SK-N-SH (cell line): ENCODE measurements at regions of chr10 and their contacts with region 1.

Region 1: GRCh38 chr10:102072673-102073527 is 7.8 kb downstream of the HPS6 start:
- DNase-seq: peak; percentile 78
- H3K4me3 ChIP-seq: no peak overlapping the region
- H3K27ac ChIP-seq: no peak overlapping the region
- H3K4me1 ChIP-seq: peaks cover 0 to 4% of the 10 kb centered on the region in 2 experiments; a peak in 2 of 4 replicates
- H3K27me3 ChIP-seq: no peaks in the 10 kb centered on the region
- CTCF ChIP-seq: peak; percentile 92
- EP300 ChIP-seq: no peak
- RAD21 ChIP-seq: peak; percentile 84

Region 2: DNA sequence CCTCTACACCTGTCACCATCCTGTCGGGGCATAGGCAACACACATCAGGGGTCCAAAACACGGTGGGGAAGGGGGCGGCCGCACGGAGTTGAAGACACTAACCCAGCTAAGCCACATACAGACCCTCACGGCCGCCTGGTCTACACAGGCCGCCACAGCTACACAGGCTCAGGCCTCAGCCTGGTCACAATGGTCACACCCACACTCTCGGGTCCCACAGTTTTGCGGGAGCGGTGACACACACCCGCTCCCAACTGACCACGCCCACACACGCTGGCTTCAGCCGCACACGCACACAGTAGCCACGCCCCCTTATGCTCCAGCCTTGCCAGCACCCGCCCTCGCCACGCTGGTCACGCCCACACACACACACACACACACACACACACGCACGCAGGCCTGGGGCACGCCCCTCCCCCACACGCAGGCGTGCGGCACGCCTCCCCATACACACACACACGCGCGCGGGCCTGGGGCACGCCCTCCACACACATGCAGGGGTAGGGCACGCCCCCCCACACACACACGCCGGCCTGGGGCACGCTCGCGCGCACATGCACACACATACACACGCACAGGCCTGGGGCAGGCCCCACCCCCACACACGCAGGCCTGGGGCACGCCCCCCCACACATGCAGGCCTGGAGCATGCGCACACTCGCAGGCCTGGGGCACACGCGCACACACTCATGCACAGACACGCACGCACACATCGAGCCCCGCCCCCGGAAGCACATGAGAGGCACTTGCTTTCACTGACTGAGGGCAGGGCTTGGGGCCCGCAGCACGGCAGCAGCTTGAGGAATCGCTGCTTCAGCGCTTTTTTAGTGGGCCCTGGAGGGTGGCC is 242.4 kb before region 1 on chr10:
- CTCF ChIA-PET with region 1: interaction called, 10 read pairs
- POLR2A ChIA-PET with region 1: no interaction called
- DNase-seq: peak; percentile 96
- H3K4me3 ChIP-seq: peak overlapping the region; percentile 45 to 49
- H3K27ac ChIP-seq: peak overlapping the region; percentile 41 to 87; a peak in 3 of 4 replicates
- H3K4me1 ChIP-seq: peaks cover 14 to 35% of the 10 kb centered on the region in 2 experiments; a peak in 3 of 4 replicates
- H3K27me3 ChIP-seq: no peaks in the 10 kb centered on the region
- CTCF ChIP-seq: no peak
- EP300 ChIP-seq: no peak
- RAD21 ChIP-seq: no peak

Region 3: DNA sequence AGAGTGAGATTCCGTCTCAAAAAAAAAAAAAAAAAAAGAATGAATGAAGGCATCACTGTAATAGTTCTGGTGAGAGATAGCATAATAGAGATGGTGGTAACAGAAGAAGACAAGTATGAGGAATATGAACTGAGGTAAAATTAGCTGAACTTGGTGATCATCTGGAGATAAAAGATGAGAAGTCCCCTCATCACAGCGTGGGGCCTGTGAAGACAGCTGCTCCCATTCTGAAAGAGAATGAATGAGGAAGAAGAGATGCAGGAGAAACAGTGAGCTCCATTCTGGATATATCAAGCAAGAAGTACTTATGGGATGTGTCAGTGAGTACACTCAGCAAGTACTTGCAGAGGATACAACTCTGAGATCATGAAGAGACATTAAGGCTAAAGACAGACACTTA is 45.6 kb before region 1 on chr10:
- CTCF ChIA-PET with region 1: interaction called, 10 read pairs
- POLR2A ChIA-PET with region 1: no interaction called
- DNase-seq: no peak
- H3K4me3 ChIP-seq: no peak overlapping the region
- H3K27ac ChIP-seq: no peak overlapping the region
- H3K4me1 ChIP-seq: no peaks in the 10 kb centered on the region
- H3K27me3 ChIP-seq: no peaks in the 10 kb centered on the region
- CTCF ChIP-seq: no peak
- EP300 ChIP-seq: no peak
- RAD21 ChIP-seq: no peak

Region 4: GRCh38 chr10:102083541-102083940 is 10.6 kb after region 1 on chr10:
- CTCF ChIA-PET with region 1: interaction called, 54 read pairs
- POLR2A ChIA-PET with region 1: interaction called, 3 read pairs
- DNase-seq: no peak
- H3K4me3 ChIP-seq: no peak overlapping the region
- H3K27ac ChIP-seq: no peak overlapping the region
- H3K4me1 ChIP-seq: no peaks in the 10 kb centered on the region
- H3K27me3 ChIP-seq: no peaks in the 10 kb centered on the region
- CTCF ChIP-seq: no peak
- EP300 ChIP-seq: no peak
- RAD21 ChIP-seq: no peak

Region 5: GRCh38 chr10:102101152-102101551 is 28.3 kb after region 1 on chr10:
- CTCF ChIA-PET with region 1: interaction called, 38 read pairs
- POLR2A ChIA-PET with region 1: no interaction called
- DNase-seq: no peak
- H3K4me3 ChIP-seq: no peak overlapping the region
- H3K27ac ChIP-seq: no peak overlapping the region
- H3K4me1 ChIP-seq: no peaks in the 10 kb centered on the region
- H3K27me3 ChIP-seq: no peaks in the 10 kb centered on the region
- CTCF ChIP-seq: no peak
- EP300 ChIP-seq: no peak
- RAD21 ChIP-seq: no peak

Region 6: DNA sequence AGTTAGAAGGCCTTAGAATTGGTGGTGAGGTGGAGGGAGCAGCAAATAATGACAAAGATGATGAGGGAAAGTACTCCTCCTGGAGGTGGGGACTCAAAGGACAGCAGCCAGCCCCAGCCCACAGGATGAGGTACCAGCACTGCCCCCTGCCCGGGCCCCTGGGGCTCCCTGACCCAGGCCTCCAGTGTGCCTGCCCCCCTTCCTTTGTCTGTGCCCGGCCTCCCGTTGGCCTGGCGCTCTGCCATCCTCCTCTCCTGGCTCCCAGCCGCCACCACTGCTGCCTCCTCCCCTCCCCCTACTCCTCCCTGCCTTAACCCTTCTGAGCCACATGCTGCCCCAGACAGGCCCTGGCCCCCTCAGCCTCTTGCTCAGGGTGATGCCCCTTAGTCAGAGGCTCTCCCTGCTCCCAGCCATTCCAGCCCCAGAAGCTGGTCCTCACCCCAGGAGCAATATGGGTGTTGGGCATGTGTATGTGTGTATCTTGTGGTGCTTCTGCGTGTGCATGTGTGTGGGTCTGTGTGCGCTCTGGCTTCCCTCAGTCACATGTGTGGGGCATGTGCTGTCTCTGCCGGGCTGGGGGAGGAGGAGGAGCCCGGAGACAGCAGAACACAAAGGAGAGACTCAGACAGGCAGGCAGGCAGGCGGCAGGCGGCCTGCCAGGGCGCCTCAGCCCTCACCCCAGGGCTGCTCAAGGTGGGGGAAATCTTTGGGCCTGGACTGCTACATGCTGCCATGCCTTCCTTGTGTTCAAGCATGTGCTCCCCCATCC is 44.7 kb after region 1 on chr10:
- CTCF ChIA-PET with region 1: interaction called, 14 read pairs
- POLR2A ChIA-PET with region 1: no interaction called
- DNase-seq: peak; percentile 89
- H3K4me3 ChIP-seq: peak overlapping the region; percentile 29 to 86
- H3K27ac ChIP-seq: peak overlapping the region; percentile 86 to 99
- H3K4me1 ChIP-seq: peaks cover 49 to 65% of the 10 kb centered on the region in 2 experiments
- H3K27me3 ChIP-seq: no peaks in the 10 kb centered on the region
- CTCF ChIP-seq: peak; percentile 40
- EP300 ChIP-seq: peak in 1 of 2 experiments; percentile 43; a peak in 2 of 4 replicates
- RAD21 ChIP-seq: peak; percentile 45; the same call in 1 of the 2 replicates

Region 7: GRCh38 chr10:102140184-102140583 is 67.3 kb after region 1 on chr10:
- CTCF ChIA-PET with region 1: no interaction called
- POLR2A ChIA-PET with region 1: no interaction called
- DNase-seq: no peak
- H3K4me3 ChIP-seq: no peak overlapping the region
- H3K27ac ChIP-seq: no peak overlapping the region
- H3K4me1 ChIP-seq: peaks cover 3 to 6% of the 10 kb centered on the region in 2 experiments; a peak in 2 of 4 replicates
- H3K27me3 ChIP-seq: no peaks in the 10 kb centered on the region
- CTCF ChIP-seq: no peak
- EP300 ChIP-seq: no peak
- RAD21 ChIP-seq: no peak

Region 8: DNA sequence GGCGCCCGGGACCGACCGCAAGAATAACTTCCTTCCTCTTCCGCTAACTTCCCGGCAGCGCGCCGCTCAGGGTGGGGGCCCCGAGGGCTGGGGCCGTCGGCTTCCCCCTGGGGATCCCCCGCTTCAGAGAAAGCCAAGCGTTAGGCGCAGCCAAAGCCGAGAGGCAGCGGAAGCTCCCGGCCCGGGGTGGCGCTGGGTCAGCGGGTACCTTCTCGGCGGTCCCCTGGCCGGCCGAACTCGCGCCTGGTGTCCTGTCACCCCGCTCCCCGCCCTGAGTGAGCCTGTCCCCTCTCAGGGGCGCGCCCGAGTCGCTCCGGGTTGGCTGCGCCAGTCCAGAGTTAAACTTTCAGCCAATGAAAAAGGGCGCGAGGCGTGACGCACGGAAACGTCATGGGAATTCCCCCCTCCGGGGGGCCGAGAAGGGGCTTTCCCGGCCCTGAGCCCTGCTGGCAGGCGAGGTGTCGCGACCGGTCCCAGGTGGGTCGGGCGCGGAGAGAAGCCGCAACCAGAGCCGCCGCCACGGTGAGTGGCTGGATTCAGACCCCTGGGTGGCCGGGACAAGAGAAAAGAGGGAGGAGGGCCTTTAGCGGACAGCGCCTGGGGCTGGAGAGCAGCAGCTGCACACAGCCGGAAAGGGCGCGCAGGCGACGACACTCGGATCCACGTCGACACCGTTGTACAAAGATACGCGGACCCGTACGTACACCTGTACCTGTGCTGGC is 321.3 kb after region 1 on chr10:
- CTCF ChIA-PET with region 1: no interaction called
- POLR2A ChIA-PET with region 1: no interaction called
- DNase-seq: peak; percentile 92
- H3K4me3 ChIP-seq: peak overlapping the region; percentile 65 to 77
- H3K27ac ChIP-seq: peak overlapping the region; percentile 47 to 81; a peak in 3 of 4 replicates
- H3K4me1 ChIP-seq: peaks cover 0 to 17% of the 10 kb centered on the region in 2 experiments; a peak in 1 of 4 replicates
- H3K27me3 ChIP-seq: no peaks in the 10 kb centered on the region
- CTCF ChIP-seq: no peak; the same call in 1 of the 2 replicates
- EP300 ChIP-seq: no peak
- RAD21 ChIP-seq: no peak